Pancreas (tissue), 10 donors: ENCODE measurements at regions of chr17 and their contacts with region 1.

Region 1: GRCh38 chr17:7004398-7005253 is 7.8 kb upstream of the RNASEK start:
- DNase-seq: peak in 1 of 6 donors; percentile 43
- ATAC-seq: peak; percentile 68 to 95 (median 87)
- H3K4me3 ChIP-seq: no peak overlapping the region
- H3K27ac ChIP-seq: no peak overlapping the region
- H3K4me1 ChIP-seq: no peaks in the 10 kb centered on the region
- H3K27me3 ChIP-seq: no peaks in the 10 kb centered on the region
- CTCF ChIP-seq: peak; percentile 33 to 62 (median 42)

Region 2: DNA sequence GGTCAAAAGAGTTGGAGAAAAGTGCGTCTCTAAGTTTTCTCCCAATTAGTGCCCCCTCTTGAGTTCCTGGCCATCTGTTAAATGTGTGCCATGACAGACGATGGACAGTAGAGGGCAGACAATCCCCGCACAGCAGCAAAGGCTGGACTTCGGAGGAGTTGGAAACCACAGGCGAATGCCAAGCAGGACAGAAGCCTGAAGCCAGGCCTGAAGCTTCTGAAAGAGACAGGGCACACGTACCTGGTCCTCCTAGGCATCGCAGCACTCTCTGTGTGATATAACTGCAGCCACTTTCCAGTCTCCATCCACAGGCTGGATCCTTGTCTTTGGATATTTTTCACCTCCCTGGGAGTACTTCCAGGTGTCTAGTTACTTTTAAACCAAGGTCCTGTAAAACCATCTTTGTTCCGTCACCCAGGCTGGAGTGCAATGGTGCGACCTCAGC is 338.5 kb before region 1 on chr17:
- intact Hi-C with region 1: loop called in 1 of 3 experiments (anchors 10 kb)
- DNase-seq: peak; percentile 60 to 85 (median 70)
- ATAC-seq: peak; percentile 96 to 100 (median 99)
- H3K4me3 ChIP-seq: no peak overlapping the region
- H3K27ac ChIP-seq: no peak overlapping the region
- H3K4me1 ChIP-seq: peaks cover 0 to 5% (median 0%) of the 10 kb centered on the region in 3 donors
- H3K27me3 ChIP-seq: no peaks in the 10 kb centered on the region
- CTCF ChIP-seq: peak; percentile 65 to 82 (median 67)

Region 3: GRCh38 chr17:6843241-6843880 is 161.3 kb before region 1 on chr17:
- intact Hi-C with region 1: loop called in 2 of 3 experiments (anchors 10 kb)
- DNase-seq: no peak
- ATAC-seq: peak in 3 of 4 donors; percentile 56 to 75 (median 70)
- H3K4me3 ChIP-seq: no peak overlapping the region
- H3K27ac ChIP-seq: no peak overlapping the region
- H3K4me1 ChIP-seq: no peaks in the 10 kb centered on the region
- H3K27me3 ChIP-seq: no peaks in the 10 kb centered on the region
- CTCF ChIP-seq: peak in 3 of 4 donors; percentile 31 to 49 (median 48)

Region 4: GRCh38 chr17:6913608-6914443 is 90.8 kb before region 1 on chr17:
- intact Hi-C with region 1: loop called in 1 of 3 experiments (anchors 10 kb)
- DNase-seq: peak; percentile 20 to 82 (median 47)
- ATAC-seq: peak in 3 of 4 donors; percentile 71 to 91 (median 90)
- H3K4me3 ChIP-seq: peak overlapping the region in 1 of 4 donors; percentile 26
- H3K27ac ChIP-seq: no peak overlapping the region
- H3K4me1 ChIP-seq: peaks cover 0 to 3% (median 0%) of the 10 kb centered on the region in 3 donors
- H3K27me3 ChIP-seq: no peaks in the 10 kb centered on the region
- CTCF ChIP-seq: peak in 3 of 4 donors; percentile 42 to 62 (median 42)